ENCODE measurements at regions of chr11 and their contacts with region 1.

Region 1: GRCh38 chr11:40037005-40037404 is 1422.4 kb downstream of the LRRC4C start:
- DNase-seq: no peak
- H3K4me3 ChIP-seq: no peak overlapping the region
- H3K27ac ChIP-seq: no peak overlapping the region
- H3K4me1 ChIP-seq: no peaks in the 10 kb centered on the region
- H3K27me3 ChIP-seq: no peaks in the 10 kb centered on the region
- CTCF ChIP-seq: no peak
- POLR2A ChIP-seq: no peak

Region 2: DNA sequence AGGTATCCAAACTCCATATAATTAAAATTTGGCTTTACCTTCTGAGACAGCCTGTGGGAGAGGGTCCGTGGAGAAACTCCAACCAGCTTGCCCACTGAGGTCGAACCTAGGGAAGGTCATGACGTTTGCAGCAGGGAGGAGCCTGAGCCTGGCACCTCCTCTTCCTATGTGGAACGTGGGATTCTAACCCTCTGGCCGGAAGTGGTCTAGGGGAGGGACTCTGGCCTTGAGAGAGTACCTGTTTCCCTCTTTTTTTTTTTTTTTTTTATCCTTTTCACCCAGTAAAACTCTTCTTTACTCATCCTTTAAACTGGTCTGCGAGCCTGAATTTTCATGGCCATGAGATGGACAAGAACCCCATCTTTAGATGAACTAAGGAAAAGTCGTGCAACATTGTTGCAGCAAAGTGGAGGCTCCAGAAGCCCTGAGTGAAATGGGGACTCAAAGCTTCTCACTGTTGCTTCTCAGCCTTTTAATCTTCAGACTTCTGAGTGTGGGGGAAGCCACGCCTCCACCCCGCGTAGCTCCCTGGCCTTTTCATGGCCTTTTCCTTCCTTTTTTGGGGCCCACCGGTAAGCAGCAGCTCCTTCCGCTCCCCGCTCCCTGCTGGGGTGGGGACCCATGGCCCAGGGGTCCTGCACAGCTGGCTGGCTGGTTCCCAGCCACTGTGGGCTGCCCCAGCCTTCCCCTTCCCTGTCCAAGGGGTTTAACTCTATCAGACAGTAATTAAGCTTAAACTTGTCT is 62.6 kb after region 1 on chr11:
- intact Hi-C with region 1: loop called (anchors 10 kb)
- DNase-seq: no peak
- H3K4me3 ChIP-seq: no peak overlapping the region
- H3K27ac ChIP-seq: no peak overlapping the region
- H3K4me1 ChIP-seq: no peaks in the 10 kb centered on the region
- H3K27me3 ChIP-seq: no peaks in the 10 kb centered on the region
- CTCF ChIP-seq: no peak
- POLR2A ChIP-seq: no peak